Right ventricle myocardium inferior (tissue), 1 donor: ENCODE measurements at regions of chr1 and their contacts with region 1.

Region 1: DNA sequence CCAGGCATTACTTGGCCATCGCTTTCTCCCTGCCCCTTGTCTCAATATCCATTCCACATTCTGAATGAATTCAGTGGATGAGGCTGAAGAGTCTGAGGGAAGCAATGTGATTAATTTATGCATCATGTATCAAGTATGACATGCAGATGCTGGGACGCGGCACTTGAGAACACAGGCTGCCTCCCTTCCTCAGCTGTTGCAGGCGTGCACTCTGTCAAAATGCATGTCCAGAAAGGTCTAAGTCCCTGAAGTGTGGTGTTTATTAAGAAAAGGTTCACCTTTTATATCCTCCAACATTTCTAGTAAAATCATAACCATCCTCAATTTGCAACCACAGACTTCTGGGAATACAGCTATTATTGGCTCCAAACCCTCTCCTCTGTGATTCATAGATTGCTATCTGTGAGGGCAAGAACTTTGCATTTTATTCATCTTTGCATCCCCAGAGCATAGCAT is 22.6 kb upstream of the RAB3GAP2 start:
- DNase-seq: no peak
- ATAC-seq: no peak

Region 2: GRCh38 chr1:220487297-220487820 is 192.5 kb after region 1 on chr1:
- intact Hi-C with region 1: loop called (anchors 10 kb)
- DNase-seq: no peak
- ATAC-seq: no peak

Region 3: GRCh38 chr1:220511768-220512167 is 216.9 kb after region 1 on chr1:
- intact Hi-C with region 1: loop called (anchors 10 kb)
- DNase-seq: no peak
- ATAC-seq: peak; percentile 72